ENCODE measurements at regions of chr5 and their contacts with region 1.

Region 1: GRCh38 chr5:128201065-128201926 is 117.7 kb downstream of the SLC12A2 start:
- DNase-seq: no peak
- H3K4me3 ChIP-seq: no peak overlapping the region
- CTCF ChIP-seq: peak; percentile 81

Region 2: GRCh38 chr5:127243011-127243410 is 958.3 kb before region 1 on chr5:
- in situ Hi-C with region 1: no loop called
- DNase-seq: no peak
- H3K4me3 ChIP-seq: no peak overlapping the region
- CTCF ChIP-seq: no peak

Region 3: DNA sequence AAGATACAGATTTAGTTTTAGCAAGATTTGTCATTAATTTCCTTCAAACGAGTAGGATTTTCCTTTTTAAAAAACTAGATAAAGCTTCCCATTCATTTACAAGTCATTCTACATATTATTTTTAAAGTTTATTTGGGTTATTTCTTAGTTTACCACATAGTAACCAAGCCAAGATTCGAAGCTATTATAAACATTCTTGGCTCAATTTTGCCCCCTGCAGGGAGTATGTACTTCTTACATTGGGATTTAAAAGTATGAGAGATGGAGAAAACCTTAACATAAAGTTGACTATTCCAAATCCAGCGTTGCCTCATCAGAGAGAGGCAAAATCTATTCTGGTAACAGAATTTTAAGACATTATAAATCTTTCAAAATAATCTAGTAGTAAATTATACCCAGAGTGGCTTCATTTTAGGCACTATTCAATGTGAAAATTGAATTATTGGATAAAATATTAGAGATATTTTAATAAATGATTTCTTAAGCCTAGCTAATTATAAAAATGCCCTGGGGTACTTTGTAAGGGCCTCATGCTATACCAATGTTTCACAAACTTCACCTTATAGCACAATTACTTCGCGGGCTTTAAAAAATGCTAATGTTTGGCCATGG is 297.7 kb after region 1 on chr5:
- in situ Hi-C with region 1: loop called (anchors 25 kb)
- DNase-seq: peak; percentile 85
- H3K4me3 ChIP-seq: no peak overlapping the region
- CTCF ChIP-seq: peak; percentile 34

Region 4: GRCh38 chr5:128844354-128844923 is 643.1 kb after region 1 on chr5:
- in situ Hi-C with region 1: loop called (anchors 25 kb)
- DNase-seq: peak; percentile 26
- H3K4me3 ChIP-seq: no peak overlapping the region
- CTCF ChIP-seq: no peak

Measured in astrocyte of the cerebellum (primary cell).